ENCODE measurements at regions of chr9 and their contacts with region 1.

Region 1: GRCh38 chr9:92764988-92765936 is 629 bp upstream of the BICD2 start:
- DNase-seq: peak; percentile 99
- H3K4me3 ChIP-seq: peak overlapping the region; percentile 88 to 95 (median 91)
- H3K27ac ChIP-seq: peak overlapping the region; percentile 96 to 100 (median 99)
- H3K4me1 ChIP-seq: peaks cover 19 to 37% of the 10 kb centered on the region in 2 donors
- H3K27me3 ChIP-seq: no peaks in the 10 kb centered on the region
- CTCF ChIP-seq: peak; percentile 74 to 97 (median 92)
- POLR2A ChIP-seq: peak in 1 of 2 donors; percentile 81

Region 2: GRCh38 chr9:92669890-92670708 is 95.2 kb before region 1 on chr9 and contains the start of gene IPPK:
- intact Hi-C with region 1: loop called (anchors 5 kb)
- DNase-seq: peak; percentile 99
- H3K4me3 ChIP-seq: peak within 1 kb of the TSS; percentile 69 to 94 (median 90)
- H3K27ac ChIP-seq: peak within 1 kb of the TSS; percentile 29 to 76 (median 73)
- H3K4me1 ChIP-seq: peaks cover 12 to 20% of the 10 kb centered on the region in 2 donors
- H3K27me3 ChIP-seq: no peaks in the 10 kb centered on the region
- CTCF ChIP-seq: no peak
- POLR2A ChIP-seq: peak in 1 of 2 donors; percentile 71
- total RNA-seq, gene IPPK: 6.3 to 12.2 (median 10.2) TPM

Region 3: GRCh38 chr9:92820964-92821363 is 55.7 kb after region 1 on chr9:
- intact Hi-C with region 1: no loop called
- DNase-seq: no peak
- H3K4me3 ChIP-seq: no peak overlapping the region
- H3K27ac ChIP-seq: no peak overlapping the region
- H3K4me1 ChIP-seq: no peaks in the 10 kb centered on the region
- H3K27me3 ChIP-seq: no peaks in the 10 kb centered on the region
- CTCF ChIP-seq: no peak
- POLR2A ChIP-seq: no peak